ENCODE measurements at regions of chr5 and their contacts with region 1.

Region 1: GRCh38 chr5:152527358-152528052 is 122.4 kb upstream of the NMUR2 start:
- DNase-seq: no peak
- H3K4me3 ChIP-seq: no peak overlapping the region
- H3K27ac ChIP-seq: no peak overlapping the region
- H3K4me1 ChIP-seq: peaks cover 0 to 16% (median 4%) of the 10 kb centered on the region in 4 experiments; a peak in 5 of 7 replicates
- H3K27me3 ChIP-seq: no peaks in the 10 kb centered on the region
- CTCF ChIP-seq: no peak
- EP300 ChIP-seq: no peak
- POLR2A ChIP-seq: no peak
- RAD21 ChIP-seq: no peak

Region 2: DNA sequence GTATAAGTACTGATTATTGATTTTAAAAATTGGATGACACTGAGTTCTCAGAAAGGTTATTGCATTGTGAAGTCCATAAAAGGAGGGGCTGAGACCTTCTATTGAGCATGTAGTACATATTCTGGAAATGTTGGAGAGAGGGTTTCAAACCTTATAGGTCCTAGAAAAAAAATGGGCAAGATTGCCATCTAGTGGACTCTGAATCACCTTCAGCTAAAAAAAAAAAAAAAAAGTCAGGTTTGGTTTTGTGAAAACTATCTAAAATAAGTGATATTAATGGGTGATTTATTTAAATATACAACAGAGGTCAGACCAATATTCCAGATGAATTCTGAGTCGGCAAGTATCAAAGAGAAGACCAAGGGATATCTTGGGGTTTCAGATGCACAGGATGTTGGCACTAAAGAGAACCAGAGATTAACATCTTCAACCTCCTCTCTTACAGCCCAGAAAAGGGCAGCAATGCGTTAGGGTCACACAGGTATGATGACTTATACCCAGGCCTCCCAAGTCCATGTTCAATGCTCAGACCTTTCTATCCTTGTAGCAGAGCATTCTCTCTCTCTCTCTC is 12.6 kb before region 1 on chr5:
- CTCF ChIA-PET with region 1: interaction called, 13 read pairs
- POLR2A ChIA-PET with region 1: no interaction called
- DNase-seq: no peak
- H3K4me3 ChIP-seq: no peak overlapping the region
- H3K27ac ChIP-seq: no peak overlapping the region
- H3K4me1 ChIP-seq: no peaks in the 10 kb centered on the region
- H3K27me3 ChIP-seq: no peaks in the 10 kb centered on the region
- CTCF ChIP-seq: peak in 2 of 3 experiments; percentile 19 to 32; a peak in 2 of 4 replicates
- EP300 ChIP-seq: no peak
- POLR2A ChIP-seq: no peak
- RAD21 ChIP-seq: peak; percentile 49 to 53

Measured in H1 (cell line).